ENCODE measurements at regions of chr14 and their contacts with region 1.

Region 1: GRCh38 chr14:65229751-65230749 is 127.7 kb upstream of the MAX start:
- DNase-seq: peak; percentile 75
- H3K4me3 ChIP-seq: peak overlapping the region; percentile 14 to 65 (median 23)
- H3K27ac ChIP-seq: peak overlapping the region; percentile 70
- H3K4me1 ChIP-seq: peaks cover 17% of the 10 kb centered on the region
- H3K27me3 ChIP-seq: no peaks in the 10 kb centered on the region
- CTCF ChIP-seq: no peak
- POLR2A ChIP-seq: no peak

Region 2: GRCh38 chr14:64137657-64138290 is 1092.3 kb before region 1 on chr14:
- CTCF ChIA-PET with region 1: no interaction called
- POLR2A ChIA-PET with region 1: no interaction called
- dilution Hi-C with region 1: no loop called
- intact Hi-C with region 1: no loop called
- DNase-seq: peak; percentile 20
- H3K4me3 ChIP-seq: no peak overlapping the region
- H3K27ac ChIP-seq: no peak overlapping the region
- H3K4me1 ChIP-seq: no peaks in the 10 kb centered on the region
- H3K27me3 ChIP-seq: no peaks in the 10 kb centered on the region
- CTCF ChIP-seq: peak in 1 of 2 donors; percentile 22
- POLR2A ChIP-seq: no peak

Region 3: DNA sequence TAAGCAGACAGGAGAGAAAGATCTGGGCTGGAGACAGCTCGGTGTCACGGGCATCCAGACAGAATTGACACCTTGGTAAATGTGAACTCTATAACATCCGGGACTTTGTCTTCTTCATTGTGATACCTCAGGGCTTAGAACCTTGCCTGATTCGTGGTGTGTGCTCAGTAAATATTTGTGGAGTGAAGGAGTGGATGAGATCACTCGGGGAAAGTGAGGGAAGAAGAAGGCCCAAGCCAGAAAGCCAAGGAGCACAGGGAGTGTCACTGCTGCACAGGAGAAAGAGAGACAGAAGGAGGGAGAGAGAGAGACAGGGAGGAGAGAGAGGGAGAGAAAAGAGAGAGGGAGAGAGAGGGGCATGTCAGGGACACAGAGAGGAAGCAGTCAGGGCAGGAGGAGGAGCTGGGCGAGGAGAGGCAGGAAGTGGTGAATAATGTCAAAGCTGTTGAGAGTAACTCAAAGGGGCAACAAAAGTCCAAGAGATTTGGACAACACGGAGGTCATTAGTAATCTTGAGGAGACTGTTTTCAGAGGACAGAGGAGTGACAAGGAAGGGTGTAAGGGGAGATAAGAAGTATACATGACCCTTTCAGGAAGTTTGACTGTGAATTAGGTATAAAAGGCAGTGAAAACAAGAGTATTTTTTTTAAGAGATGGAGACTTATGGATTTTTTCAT is 13.9 kb after region 1 on chr14:
- CTCF ChIA-PET with region 1: interaction called, 6 read pairs
- POLR2A ChIA-PET with region 1: no interaction called
- dilution Hi-C with region 1: no loop called
- intact Hi-C with region 1: loop called (anchors 1 kb)
- DNase-seq: peak; percentile 93
- H3K4me3 ChIP-seq: peak overlapping the region in 1 of 3 experiments; percentile 16
- H3K27ac ChIP-seq: peak overlapping the region; percentile 85
- H3K4me1 ChIP-seq: peaks cover 47% of the 10 kb centered on the region
- H3K27me3 ChIP-seq: no peaks in the 10 kb centered on the region
- CTCF ChIP-seq: no peak
- POLR2A ChIP-seq: peak; percentile 88

Measured in endothelial cell of umbilical vein (primary cell).